Naive thymus-derived CD4-positive, alpha-beta T cell (primary cell): ENCODE measurements at regions of chr16 and their contacts with region 1.

Region 1: DNA sequence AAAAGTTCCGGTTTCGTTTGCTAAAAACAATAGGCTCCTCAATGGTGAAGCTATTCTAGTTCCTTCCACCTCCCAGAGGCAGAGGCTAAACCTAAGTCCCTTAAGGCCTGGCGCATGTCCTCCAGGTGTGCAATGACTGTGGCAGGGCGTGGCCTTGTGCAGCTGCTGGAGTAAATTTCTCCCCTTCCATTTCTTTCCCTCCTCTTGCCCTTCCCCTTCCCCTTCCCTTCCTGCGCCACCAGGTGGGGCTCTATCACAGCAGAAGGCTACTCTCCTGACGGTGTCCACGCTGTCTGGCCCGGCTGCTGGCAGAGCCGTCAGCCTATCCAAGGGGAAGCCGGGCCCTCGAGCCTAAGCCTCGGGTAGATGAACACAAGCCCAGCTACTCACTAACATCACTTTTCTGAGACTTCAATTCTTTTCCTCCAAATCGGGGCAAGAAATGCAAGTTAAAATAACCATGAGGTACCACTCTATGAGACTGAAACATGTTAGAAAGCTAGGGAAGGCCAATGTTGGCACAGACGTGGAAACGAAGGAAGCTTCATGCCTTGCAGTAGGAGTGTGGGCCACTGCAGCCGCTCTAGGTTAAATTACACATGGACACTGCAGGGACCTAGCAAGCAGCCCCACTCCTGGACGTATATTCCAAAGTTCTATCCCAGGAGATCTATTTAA is 34.4 kb downstream of the C16orf78 start:
- DNase-seq: peak; percentile 38 to 67 (median 60)
- ATAC-seq: peak; percentile 71
- H3K4me3 ChIP-seq: no peak overlapping the region
- H3K4me3 Mint-ChIP-seq: peak overlapping the region in 3 of 10 donors; percentile 12 to 53 (median 17)
- H3K27ac ChIP-seq: no peak overlapping the region
- H3K27ac Mint-ChIP-seq: no peak overlapping the region
- H3K4me1 ChIP-seq: no peaks in the 10 kb centered on the region
- H3K4me1 Mint-ChIP-seq: no peaks in the 10 kb centered on the region
- H3K27me3 ChIP-seq: no peaks in the 10 kb centered on the region
- H3K27me3 Mint-ChIP-seq: peaks cover 5 to 10% (median 6%) of the 10 kb centered on the region in 5 donors

Region 2: DNA sequence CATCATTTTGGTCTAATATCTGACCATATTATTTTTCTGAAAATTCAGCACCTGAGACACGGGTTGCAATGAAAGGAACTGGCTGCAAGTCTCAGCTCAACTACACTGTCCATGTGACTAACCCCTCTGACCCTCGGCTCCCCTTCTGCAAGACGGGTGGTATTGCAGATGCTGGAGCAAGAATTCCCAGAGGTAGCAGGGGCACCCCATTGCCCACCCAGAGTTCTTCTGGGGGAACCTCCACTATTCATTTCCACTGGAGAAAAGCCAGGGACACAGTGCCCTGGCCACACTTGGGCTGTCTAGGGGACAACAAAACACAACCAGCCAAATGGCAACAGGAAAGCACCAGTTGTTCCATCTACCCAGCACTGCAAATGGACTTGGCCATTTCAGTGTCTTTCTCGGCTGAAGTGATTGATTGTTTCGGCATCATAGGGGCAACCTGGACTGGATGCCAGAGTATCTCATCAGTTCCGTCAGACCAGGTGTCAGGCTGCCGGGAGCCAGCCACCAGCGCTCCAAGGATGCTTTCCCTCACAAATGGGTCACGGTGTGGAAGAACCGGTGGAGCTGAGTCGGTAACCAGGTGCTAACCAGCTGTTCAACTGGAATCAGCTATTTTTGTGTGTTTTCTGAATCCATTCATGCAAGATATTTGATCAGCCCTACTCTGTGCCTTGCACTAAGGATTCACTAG is 23.7 kb after region 1 on chr16:
- CTCF ChIA-PET with region 1: no interaction called
- POLR2A ChIA-PET with region 1: no interaction called
- intact Hi-C with region 1: no loop called
- DNase-seq: no peak
- ATAC-seq: no peak
- H3K4me3 ChIP-seq: no peak overlapping the region
- H3K4me3 Mint-ChIP-seq: no peak overlapping the region
- H3K27ac ChIP-seq: no peak overlapping the region
- H3K27ac Mint-ChIP-seq: no peak overlapping the region
- H3K4me1 ChIP-seq: no peaks in the 10 kb centered on the region
- H3K4me1 Mint-ChIP-seq: no peaks in the 10 kb centered on the region
- H3K27me3 ChIP-seq: no peaks in the 10 kb centered on the region
- H3K27me3 Mint-ChIP-seq: peaks cover 0 to 14% (median 0%) of the 10 kb centered on the region in 5 donors

Region 3: DNA sequence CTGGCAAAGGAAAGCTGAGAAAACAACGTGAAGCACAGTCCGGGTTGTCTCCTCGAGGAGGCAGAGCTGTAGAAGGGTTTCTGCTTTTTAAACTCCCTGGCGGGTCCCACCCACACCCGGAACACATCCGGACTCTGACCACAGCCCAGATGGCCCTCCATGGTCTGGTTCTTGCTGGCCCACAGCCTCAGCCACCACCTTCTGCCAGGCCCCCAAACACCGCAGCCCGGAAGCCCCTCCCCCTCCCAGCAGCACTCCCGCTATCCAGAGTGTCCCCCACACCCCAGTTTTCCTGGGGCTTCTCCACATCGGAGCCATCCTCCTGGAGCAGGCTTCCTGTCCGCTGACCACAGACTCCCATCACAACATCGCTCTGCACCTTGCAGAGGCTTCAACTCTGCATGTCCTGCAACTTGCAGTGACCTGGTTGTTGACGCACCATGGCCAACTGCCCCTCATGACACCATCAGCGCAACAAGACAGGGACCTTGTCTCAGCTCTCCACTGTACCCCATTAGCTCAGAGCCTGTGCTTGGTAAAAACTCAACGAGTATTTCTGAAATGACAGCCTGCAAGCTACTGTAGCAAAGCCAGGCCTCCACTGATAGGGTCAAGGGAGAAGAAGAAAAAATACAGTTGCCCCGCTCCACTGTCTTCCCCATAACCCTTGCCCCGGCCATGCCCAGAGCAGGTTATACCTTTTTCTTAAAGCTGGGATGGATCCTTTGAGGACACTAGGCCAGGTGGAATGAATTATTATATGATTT is 95.4 kb after region 1 on chr16:
- CTCF ChIA-PET with region 1: no interaction called
- POLR2A ChIA-PET with region 1: no interaction called
- intact Hi-C with region 1: no loop called
- DNase-seq: no peak
- ATAC-seq: peak; percentile 27
- H3K4me3 ChIP-seq: no peak overlapping the region
- H3K4me3 Mint-ChIP-seq: peak overlapping the region in 1 of 10 donors; percentile 34
- H3K27ac ChIP-seq: no peak overlapping the region
- H3K27ac Mint-ChIP-seq: no peak overlapping the region
- H3K4me1 ChIP-seq: no peaks in the 10 kb centered on the region
- H3K4me1 Mint-ChIP-seq: peaks cover 2 to 14% (median 9%) of the 10 kb centered on the region in 7 donors
- H3K27me3 ChIP-seq: no peaks in the 10 kb centered on the region
- H3K27me3 Mint-ChIP-seq: peaks cover 0 to 9% (median 0%) of the 10 kb centered on the region in 5 donors

Region 4: GRCh38 chr16:49876716-49877129 is 468.7 kb after region 1 on chr16:
- CTCF ChIA-PET with region 1: no interaction called
- POLR2A ChIA-PET with region 1: no interaction called
- intact Hi-C with region 1: loop called in 1 of 2 experiments (anchors 1 kb)
- DNase-seq: peak in 1 of 9 donors; percentile 57
- ATAC-seq: peak; percentile 45
- H3K4me3 ChIP-seq: no peak overlapping the region
- H3K4me3 Mint-ChIP-seq: no peak overlapping the region
- H3K27ac ChIP-seq: no peak overlapping the region
- H3K27ac Mint-ChIP-seq: no peak overlapping the region
- H3K4me1 ChIP-seq: no peaks in the 10 kb centered on the region
- H3K4me1 Mint-ChIP-seq: peaks cover 0 to 2% (median 0%) of the 10 kb centered on the region in 7 donors
- H3K27me3 ChIP-seq: peaks cover 0 to 3% of the 10 kb centered on the region in 2 donors
- H3K27me3 Mint-ChIP-seq: peaks cover 35 to 63% (median 43%) of the 10 kb centered on the region in 5 donors

Region 5: DNA sequence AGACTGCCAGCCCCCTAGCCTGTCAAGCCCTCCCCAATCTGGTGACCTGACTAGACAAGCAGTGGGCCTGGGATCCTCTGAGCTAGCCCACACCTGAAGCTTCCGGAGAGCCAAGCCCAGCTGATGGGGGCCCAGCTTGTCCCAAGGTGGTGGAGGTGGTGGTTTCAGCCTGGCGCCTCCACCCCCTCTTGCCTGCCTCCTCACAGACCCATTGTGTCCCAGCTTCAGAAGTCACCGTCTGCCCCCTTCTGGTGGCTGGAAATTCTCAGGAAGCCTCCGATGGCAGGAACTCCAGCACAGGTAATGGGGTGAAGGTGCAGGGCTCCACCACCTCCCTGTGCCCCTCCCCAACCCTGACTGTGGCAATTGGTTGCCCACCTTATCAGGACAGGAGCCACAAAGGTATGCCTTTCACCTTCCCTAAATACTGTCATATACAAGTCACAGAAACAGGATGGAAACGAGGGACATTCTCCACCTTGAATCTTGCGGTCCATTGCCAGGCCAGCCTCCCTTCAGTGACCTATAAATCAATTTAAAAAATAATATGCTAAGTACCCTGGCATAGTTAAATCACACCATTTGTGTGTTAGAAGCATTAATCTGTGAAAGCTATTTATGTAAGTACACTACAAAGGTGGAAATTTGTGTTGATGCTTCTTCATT is 513.9 kb after region 1 on chr16:
- CTCF ChIA-PET with region 1: interaction called, 15 read pairs
- POLR2A ChIA-PET with region 1: no interaction called
- intact Hi-C with region 1: no loop called
- DNase-seq: peak in 8 of 9 donors; percentile 4 to 43 (median 32)
- ATAC-seq: no peak
- H3K4me3 ChIP-seq: no peak overlapping the region
- H3K4me3 Mint-ChIP-seq: no peak overlapping the region
- H3K27ac ChIP-seq: no peak overlapping the region
- H3K27ac Mint-ChIP-seq: no peak overlapping the region
- H3K4me1 ChIP-seq: no peaks in the 10 kb centered on the region
- H3K4me1 Mint-ChIP-seq: no peaks in the 10 kb centered on the region
- H3K27me3 ChIP-seq: no peaks in the 10 kb centered on the region
- H3K27me3 Mint-ChIP-seq: peaks cover 0 to 17% (median 6%) of the 10 kb centered on the region in 5 donors